ENCODE measurements at regions of chr10 and their contacts with region 1.

Region 1: GRCh38 chr10:97736902-97737769 is at the start of gene ZFYVE27:
- DNase-seq: peak; percentile 99
- CTCF ChIP-seq: no peak

Region 2: DNA sequence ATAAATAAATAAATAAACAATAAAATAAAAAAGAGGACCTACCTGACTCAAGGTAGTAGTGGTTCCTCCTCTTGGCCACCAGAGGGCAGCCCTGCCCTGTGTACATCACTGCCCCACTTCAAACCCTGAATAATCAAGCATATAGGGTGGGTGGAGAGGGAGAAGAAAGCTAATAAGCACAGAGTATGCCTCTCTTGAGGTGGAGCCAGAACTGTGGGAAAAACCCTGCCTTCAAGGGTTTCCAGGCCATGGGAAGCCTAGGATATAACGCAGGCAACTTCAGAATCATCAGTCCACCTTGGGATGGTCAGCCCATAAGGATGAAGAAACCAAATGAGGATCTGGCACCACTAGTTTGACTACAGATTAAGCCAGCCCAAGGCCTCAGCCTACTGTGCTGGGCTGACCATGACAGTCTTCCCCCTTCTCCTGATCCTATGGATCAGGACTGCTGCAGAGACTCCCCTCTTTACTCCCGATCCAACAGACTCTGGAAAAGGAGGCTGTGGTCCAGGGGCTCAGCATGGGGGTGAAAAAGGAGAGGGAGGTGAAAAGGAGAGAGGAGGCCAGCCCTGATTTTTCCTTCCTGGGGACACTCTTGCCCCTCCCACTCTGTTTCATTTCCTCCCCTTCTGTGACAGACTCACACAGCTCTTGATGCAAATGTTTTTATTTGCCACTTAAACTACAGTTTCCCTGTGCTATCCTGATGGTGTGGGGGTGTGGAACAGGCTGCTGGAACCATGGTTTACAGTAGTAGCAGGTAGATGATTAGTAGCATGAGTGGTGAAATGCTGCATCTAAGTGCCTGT is 60.2 kb before region 1 on chr10:
- CTCF ChIA-PET with region 1: interaction called, 69 read pairs
- POLR2A ChIA-PET with region 1: no interaction called
- DNase-seq: peak; percentile 77
- CTCF ChIP-seq: peak; percentile 69

Region 3: DNA sequence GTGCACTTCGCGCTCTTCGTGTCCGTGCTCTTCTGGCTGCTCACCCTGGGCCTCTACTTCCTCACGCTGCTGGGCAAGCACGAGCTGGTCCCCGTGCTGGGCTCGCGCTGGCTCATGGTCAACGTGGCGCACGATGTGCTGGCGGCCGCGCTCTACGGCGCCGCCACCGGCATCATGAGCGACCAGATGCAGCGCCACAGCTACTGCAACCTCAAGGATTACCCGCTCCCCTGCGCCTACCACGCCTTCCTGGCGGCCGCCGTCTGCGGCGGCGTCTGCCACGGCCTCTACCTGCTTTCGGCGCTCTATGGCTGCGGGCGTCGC is 23.1 kb before region 1 on chr10:
- CTCF ChIA-PET with region 1: interaction called, 552 read pairs
- POLR2A ChIA-PET with region 1: no interaction called
- DNase-seq: peak; percentile 80
- CTCF ChIP-seq: peak; percentile 28

Region 4: GRCh38 chr10:97748116-97748515 is 11.0 kb after region 1 on chr10:
- CTCF ChIA-PET with region 1: interaction called, 13 read pairs
- POLR2A ChIA-PET with region 1: interaction called, 5 read pairs
- DNase-seq: no peak
- CTCF ChIP-seq: no peak

Region 5: DNA sequence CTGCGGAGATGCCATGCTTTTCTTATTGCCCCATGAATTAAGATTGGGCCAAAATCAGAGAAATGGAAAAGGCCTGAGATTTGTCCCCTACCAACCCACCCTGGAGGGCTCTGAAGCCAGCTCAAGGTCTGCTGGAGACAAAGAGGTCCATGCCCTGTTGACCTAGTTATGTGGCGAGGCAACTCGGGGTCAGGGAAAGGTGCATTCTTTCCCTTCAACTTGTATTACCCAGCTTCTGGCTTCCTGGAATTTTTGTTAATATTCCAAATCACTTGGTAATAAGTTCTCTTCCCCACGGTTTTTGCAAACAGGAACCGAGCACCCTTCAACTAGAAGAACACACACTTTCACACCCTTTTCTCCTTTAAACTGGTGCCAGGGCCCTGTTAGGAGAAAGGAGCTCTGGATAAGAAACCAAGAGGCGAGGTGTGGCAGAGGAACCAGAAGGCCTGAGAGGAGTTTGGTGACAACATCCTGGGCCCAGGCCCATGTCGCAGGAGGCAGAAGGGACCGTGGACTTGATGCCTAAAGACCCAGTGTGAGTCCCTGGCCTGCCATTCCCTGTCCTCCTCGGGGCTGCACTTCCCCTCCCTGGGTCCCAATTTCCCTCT is 47.2 kb after region 1 on chr10:
- CTCF ChIA-PET with region 1: no interaction called
- POLR2A ChIA-PET with region 1: no interaction called
- DNase-seq: no peak
- CTCF ChIP-seq: no peak

Measured in GM10248 (cell line).